Activated T-helper 2 cell treated with anti-CD3 and anti-CD28 coated beads, Interferon-gamma antibody, Interleukin-2, Interleukin-4, amounts not matched to agents 10 μg/mL and 5 μg/mL and 100 μg/mL, durations not matched to agents 14 hours and 24 hours and 36 hours (primary cell): ENCODE measurements at regions of chr1 and their contacts with region 1.

Region 1: DNA sequence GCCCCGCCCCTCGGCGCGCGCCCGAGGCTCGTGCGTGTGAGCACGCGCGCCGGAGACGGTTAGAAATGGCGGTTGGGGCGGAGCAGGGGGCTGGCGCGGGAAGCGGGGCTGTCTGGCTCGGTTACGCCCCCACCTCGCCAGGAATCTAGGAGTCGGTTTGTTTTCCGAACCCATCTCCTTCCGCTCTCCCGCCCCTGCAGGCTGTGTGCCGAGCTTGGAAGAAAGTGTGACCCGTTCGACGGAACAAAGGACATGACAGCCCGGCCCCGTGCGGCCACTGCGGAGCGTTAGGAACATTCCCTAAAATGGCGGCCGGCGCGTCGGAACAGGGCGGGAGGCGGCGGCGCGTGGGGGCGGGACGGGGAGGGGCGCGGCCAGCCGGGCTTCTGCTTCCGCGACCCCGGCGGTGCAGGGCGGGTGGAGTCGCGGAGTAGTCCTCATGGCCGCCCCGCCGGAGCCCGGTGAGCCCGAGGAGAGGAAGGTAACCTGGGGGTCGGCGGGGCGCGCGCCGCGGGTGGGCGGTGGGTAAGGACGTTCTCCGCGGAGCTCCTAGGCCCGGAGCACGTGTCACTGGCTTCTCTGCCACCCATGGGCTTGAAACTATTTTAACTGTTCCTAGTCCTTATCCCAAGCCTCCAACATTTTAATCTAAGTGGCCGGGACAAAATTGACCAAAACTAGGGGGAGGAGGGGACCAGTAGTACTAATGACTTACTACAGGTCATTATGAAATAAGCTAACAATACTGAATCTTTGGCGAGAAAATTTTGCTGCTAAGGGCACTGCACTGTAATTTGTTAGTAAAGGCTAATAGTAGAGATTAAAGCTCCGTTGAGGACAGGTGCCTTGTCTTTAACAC is at the start of gene COX20:
- DNase-seq: peak; percentile 87
- H3K4me3 Mint-ChIP-seq: peak within 1 kb of the TSS; percentile 92
- H3K27ac Mint-ChIP-seq: peak within 1 kb of the TSS; percentile 99
- H3K4me1 Mint-ChIP-seq: peaks cover 45% of the 10 kb centered on the region
- H3K27me3 Mint-ChIP-seq: no peaks in the 10 kb centered on the region
- total RNA-seq, gene COX20: 27.1 and 33.2 TPM in 2 replicates

Region 2: DNA sequence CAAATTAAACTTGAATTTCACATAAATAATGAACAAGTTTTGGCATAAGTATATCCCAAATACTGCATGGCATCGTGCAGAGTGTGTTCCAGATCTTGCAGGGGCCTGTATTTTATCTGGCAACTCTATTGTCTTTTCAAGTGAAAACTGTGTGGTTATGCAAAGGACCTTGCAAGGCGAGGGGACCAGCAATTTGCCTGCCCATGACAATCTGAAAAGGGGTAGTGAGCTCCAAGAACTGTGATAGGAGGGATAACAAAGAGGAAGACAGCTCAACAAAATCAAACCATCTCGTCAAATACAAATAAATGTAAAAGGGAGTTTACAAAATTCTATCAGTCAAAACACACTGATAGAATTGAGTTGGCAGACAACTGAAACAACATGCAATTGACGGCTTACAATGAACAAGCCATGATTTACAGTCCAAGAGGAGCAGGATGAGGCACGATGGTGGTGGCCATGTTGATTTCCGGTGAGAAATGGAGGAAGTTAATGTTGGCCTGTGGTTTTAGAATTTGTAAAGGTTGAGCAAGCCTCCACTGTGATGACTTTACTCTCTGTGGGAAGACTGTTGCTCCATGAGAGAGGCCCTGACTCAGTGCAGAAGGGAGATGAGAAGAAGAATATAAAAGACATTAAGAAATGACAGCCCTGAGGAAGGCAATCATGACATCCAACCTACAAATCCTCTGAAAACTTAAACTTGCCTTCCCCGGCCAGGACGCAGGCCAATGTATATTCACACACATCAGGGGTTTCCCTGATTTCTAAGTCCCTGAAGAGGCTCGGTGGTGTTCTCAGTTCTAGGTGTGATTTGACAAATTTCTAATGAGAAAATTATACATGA is 516.0 kb before region 1 on chr1:
- intact Hi-C with region 1: loop called (anchors 10 kb)
- DNase-seq: peak; percentile 39
- H3K4me3 Mint-ChIP-seq: peak overlapping the region; percentile 46
- H3K27ac Mint-ChIP-seq: peak overlapping the region; percentile 90
- H3K4me1 Mint-ChIP-seq: peaks cover 45% of the 10 kb centered on the region
- H3K27me3 Mint-ChIP-seq: no peaks in the 10 kb centered on the region

Region 3: GRCh38 chr1:244599937-244600350 is 235.6 kb before region 1 on chr1:
- intact Hi-C with region 1: loop called (anchors 1 kb)
- DNase-seq: peak; percentile 49
- H3K4me3 Mint-ChIP-seq: peak overlapping the region; percentile 70
- H3K27ac Mint-ChIP-seq: peak overlapping the region; percentile 90
- H3K4me1 Mint-ChIP-seq: peaks cover 18% of the 10 kb centered on the region
- H3K27me3 Mint-ChIP-seq: peaks cover 4% of the 10 kb centered on the region

Region 4: GRCh38 chr1:244815600-244816099 is 19.9 kb before region 1 on chr1:
- intact Hi-C with region 1: loop called (anchors 2 kb)
- DNase-seq: no peak
- H3K4me3 Mint-ChIP-seq: no peak overlapping the region
- H3K27ac Mint-ChIP-seq: no peak overlapping the region
- H3K4me1 Mint-ChIP-seq: peaks cover 13% of the 10 kb centered on the region
- H3K27me3 Mint-ChIP-seq: peaks cover 4% of the 10 kb centered on the region

Region 5: DNA sequence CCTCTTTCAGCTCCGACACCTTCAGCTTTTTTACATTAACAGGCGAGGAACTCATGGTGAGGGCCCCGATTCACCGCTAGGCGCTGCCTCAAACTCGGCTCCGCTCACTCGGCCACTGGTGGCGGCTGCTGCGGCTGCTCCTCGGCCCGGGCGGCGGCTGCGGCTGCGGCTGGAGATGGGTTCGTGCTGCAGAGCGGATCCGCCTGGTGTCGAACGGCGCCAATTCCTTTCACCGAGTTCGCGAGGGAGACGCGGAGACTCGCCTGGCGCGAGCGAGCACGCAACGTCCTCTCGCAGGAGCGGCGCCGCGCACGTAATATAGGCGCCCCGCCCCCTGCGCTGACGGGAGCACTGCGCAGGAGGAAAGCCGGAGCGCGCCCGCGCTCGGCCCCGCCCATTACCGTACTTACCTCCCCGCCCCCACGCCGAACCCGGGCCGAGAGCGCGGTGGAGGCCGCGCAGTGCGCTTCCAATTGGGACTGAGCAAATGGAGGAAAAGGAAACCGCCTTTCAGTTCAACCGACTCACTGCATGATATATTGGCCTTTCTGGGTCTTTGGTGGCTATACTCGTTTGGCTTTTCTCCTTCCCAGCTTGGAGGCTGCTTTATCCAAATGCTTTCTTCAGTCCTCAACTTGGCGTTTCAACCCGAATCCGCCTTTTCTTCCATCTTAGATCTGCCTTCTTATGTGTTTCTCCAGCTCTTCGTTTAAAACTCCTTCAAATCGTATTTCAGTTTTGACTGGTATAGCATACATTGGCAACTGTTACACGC is 28.9 kb after region 1 on chr1 and contains the start of gene HNRNPU:
- intact Hi-C with region 1: loop called (anchors 1 kb)
- DNase-seq: peak; percentile 95
- H3K4me3 Mint-ChIP-seq: peak within 1 kb of the TSS; percentile 88
- H3K27ac Mint-ChIP-seq: peak within 1 kb of the TSS; percentile 94
- H3K4me1 Mint-ChIP-seq: peaks cover 37% of the 10 kb centered on the region
- H3K27me3 Mint-ChIP-seq: no peaks in the 10 kb centered on the region
- total RNA-seq, gene HNRNPU: 569 and 589 TPM in 2 replicates

Region 6: GRCh38 chr1:244945109-244945671 is 109.7 kb after region 1 on chr1:
- intact Hi-C with region 1: no loop called
- DNase-seq: no peak
- H3K4me3 Mint-ChIP-seq: no peak overlapping the region
- H3K27ac Mint-ChIP-seq: no peak overlapping the region
- H3K4me1 Mint-ChIP-seq: no peaks in the 10 kb centered on the region
- H3K27me3 Mint-ChIP-seq: peaks cover 15% of the 10 kb centered on the region

Region 7: DNA sequence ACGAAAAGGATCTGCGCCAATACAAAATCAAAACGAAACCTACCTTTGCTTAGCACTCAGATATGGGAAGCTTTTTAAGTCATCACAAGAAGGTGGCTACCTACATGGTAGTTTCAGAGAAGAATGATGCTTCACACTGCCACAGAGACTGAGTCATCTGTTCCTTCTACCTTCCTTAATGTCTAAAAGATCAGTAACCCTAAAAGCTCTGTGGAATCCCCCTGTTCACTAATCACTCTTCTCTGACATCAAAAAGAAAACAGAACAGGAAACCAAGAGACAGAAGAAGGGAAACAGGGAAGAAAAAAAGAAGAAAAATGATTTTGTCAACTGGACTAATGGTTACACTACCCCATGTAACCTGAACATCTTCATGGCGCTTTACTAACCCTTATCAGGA is 1494.4 kb after region 1 on chr1:
- intact Hi-C with region 1: loop called (anchors 5 kb)
- DNase-seq: peak; percentile 28
- H3K4me3 Mint-ChIP-seq: no peak overlapping the region
- H3K27ac Mint-ChIP-seq: peak overlapping the region; percentile 29
- H3K4me1 Mint-ChIP-seq: peaks cover 48% of the 10 kb centered on the region
- H3K27me3 Mint-ChIP-seq: no peaks in the 10 kb centered on the region